ENCODE measurements at regions of chr4 and their contacts with region 1.

Region 1: DNA sequence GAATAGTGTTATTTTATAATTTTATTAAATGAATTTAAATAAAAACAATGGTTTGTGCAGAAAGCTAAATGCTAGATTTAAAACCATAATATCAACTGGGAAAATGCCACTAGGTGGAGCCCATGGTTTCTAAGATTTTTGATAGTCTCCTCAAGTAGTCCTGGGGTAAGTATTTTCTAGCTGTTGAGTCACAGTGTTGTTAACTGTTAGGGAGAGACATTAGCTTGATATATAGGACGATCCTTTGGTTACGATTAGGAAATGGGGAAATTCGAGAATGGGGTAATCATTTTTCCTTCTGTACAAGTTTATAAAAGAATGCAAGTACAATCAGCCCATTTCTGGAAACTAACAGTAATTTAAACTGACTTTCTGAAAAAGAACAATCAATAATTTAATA is 378.4 kb downstream of the ANKRD50 start:
- DNase-seq: peak; percentile 13
- H3K4me3 ChIP-seq: no peak overlapping the region
- H3K27ac ChIP-seq: no peak overlapping the region
- H3K4me1 ChIP-seq: no peaks in the 10 kb centered on the region
- H3K27me3 ChIP-seq: no peaks in the 10 kb centered on the region
- CTCF ChIP-seq: peak in 2 of 3 experiments; percentile 32 to 46

Region 2: DNA sequence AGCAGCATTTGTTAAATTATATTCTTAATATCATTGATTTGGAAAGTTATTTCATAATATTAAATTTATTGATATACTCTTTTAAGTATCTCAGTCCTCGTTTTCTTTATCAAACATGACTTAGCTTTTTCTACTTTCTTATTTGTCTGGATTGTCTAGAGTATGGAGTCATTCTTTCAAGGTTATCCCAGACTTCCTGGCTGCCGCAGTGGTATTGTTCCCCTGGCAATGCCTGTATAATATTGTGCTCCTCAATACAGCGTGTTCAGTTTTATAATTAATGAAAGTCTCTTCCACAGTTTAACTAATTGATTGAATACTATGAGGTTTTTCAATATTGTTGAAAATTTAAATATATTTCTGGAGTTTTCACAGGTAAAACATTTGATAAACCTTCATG is 67.5 kb after region 1 on chr4:
- dilution Hi-C with region 1: no loop called
- DNase-seq: no peak
- H3K4me3 ChIP-seq: no peak overlapping the region
- H3K27ac ChIP-seq: no peak overlapping the region
- H3K4me1 ChIP-seq: no peaks in the 10 kb centered on the region
- H3K27me3 ChIP-seq: no peaks in the 10 kb centered on the region
- CTCF ChIP-seq: no peak

Region 3: DNA sequence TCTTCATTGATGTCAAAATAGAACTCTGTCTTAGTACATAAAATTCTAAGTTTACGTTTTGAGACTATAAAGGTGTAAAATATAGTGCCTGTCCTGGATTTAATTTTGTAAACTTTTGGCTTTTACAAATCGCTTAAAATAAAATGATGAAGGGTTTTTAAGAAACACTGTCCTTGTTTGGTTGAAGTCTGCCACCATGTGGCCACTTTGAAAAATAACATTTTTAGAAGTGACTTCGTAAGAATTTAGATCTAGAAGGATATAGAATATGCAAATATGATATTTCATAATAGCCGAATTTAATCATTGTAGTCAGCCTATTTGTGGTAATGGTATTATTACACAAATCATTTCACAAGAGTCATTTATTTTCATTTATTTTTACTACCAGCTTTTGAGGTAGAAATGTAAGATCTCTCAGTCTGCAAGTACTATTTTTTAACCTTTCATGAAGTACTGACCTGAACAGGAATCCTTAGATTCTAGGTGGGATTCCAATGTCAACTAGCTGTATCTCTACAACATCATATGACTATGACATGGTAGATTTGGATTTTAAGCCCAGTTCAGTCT is 949.7 kb after region 1 on chr4:
- dilution Hi-C with region 1: loop called (anchors 25 kb)
- DNase-seq: no peak
- H3K4me3 ChIP-seq: no peak overlapping the region
- H3K27ac ChIP-seq: no peak overlapping the region
- H3K4me1 ChIP-seq: no peaks in the 10 kb centered on the region
- H3K27me3 ChIP-seq: no peaks in the 10 kb centered on the region
- CTCF ChIP-seq: peak in 2 of 3 experiments; percentile 3 to 26

Measured in keratinocyte (primary cell).